Sciatic nerve (tissue), 2 donors: ENCODE measurements at regions of chr3 and their contacts with region 1.

Region 1: GRCh38 chr3:9915254-9916141 is 1.4 kb upstream of the IL17RC start:
- DNase-seq: peak; percentile 87
- ATAC-seq: peak; percentile 65

Region 2: GRCh38 chr3:9843715-9844438 is 71.6 kb before region 1 on chr3 and contains the start of gene RPUSD3:
- intact Hi-C with region 1: loop called (anchors 10 kb)
- DNase-seq: peak; percentile 99
- ATAC-seq: peak; percentile 100
- total RNA-seq, gene RPUSD3: 29.6 TPM